Sigmoid colon (tissue), 7 donors: ENCODE measurements at regions of chr2 and their contacts with region 1.

Region 1: DNA sequence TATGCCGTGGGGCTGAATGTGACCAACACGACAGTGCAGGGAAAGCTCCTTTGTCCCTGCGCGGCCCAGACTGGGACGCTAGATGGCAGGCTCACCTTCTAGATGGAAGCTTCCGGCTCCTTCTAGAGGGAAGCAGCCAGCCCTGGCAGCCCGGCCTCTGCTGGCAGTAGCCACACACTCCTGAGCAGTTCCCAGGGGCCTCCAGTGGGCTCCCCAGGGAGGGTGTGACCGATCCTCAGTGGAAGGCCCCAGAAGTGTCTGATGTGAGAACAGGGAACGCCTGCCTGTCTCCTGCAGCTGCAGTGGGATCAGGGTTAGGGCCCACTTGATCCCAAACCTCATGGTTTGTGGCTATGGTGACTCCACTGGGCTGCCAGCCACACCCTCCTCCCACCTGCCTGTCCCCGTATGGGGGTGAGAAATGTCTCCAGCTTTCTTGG is 48.5 kb upstream of the LRPPRC start:
- DNase-seq: peak; percentile 87
- H3K4me3 ChIP-seq: no peak overlapping the region
- H3K27ac ChIP-seq: no peak overlapping the region
- H3K4me1 ChIP-seq: peaks cover 0 to 6% (median 0%) of the 10 kb centered on the region in 4 donors
- H3K27me3 ChIP-seq: no peaks in the 10 kb centered on the region
- CTCF ChIP-seq: peak; percentile 47 to 80 (median 70)
- EP300 ChIP-seq: no peak
- POLR2A ChIP-seq: no peak

Region 2: GRCh38 chr2:44167940-44168680 is 123.8 kb after region 1 on chr2:
- intact Hi-C with region 1: no loop called
- DNase-seq: peak; percentile 100
- H3K4me3 ChIP-seq: peak overlapping the region; percentile 43 to 87 (median 54)
- H3K27ac ChIP-seq: peak overlapping the region; percentile 95 to 96 (median 95)
- H3K4me1 ChIP-seq: peaks cover 0 to 25% (median 16%) of the 10 kb centered on the region in 4 donors
- H3K27me3 ChIP-seq: no peaks in the 10 kb centered on the region
- CTCF ChIP-seq: no peak
- EP300 ChIP-seq: no peak
- POLR2A ChIP-seq: no peak

Region 3: GRCh38 chr2:44291281-44292248 is 247.3 kb after region 1 on chr2:
- intact Hi-C with region 1: loop called (anchors 5 kb)
- DNase-seq: no peak
- H3K4me3 ChIP-seq: no peak overlapping the region
- H3K27ac ChIP-seq: no peak overlapping the region
- H3K4me1 ChIP-seq: peaks cover 0 to 11% (median 8%) of the 10 kb centered on the region in 4 donors
- H3K27me3 ChIP-seq: no peaks in the 10 kb centered on the region
- CTCF ChIP-seq: peak in 3 of 4 experiments; percentile 34 to 43 (median 38)
- EP300 ChIP-seq: no peak
- POLR2A ChIP-seq: no peak

Region 4: GRCh38 chr2:44479122-44479887 is 435.0 kb after region 1 on chr2:
- intact Hi-C with region 1: loop called (anchors 10 kb)
- DNase-seq: no peak
- H3K4me3 ChIP-seq: no peak overlapping the region
- H3K27ac ChIP-seq: no peak overlapping the region
- H3K4me1 ChIP-seq: no peaks in the 10 kb centered on the region
- H3K27me3 ChIP-seq: no peaks in the 10 kb centered on the region
- CTCF ChIP-seq: peak; percentile 87 to 99 (median 96)
- EP300 ChIP-seq: no peak
- POLR2A ChIP-seq: no peak